ENCODE measurements at regions of chr15 and their contacts with region 1.

Region 1: GRCh38 chr15:92808978-92809879 is 90.9 kb upstream of the CHD2 start:
- DNase-seq: peak; percentile 98 to 100 (median 98)
- ATAC-seq: peak; percentile 75 to 77
- H3K4me3 Mint-ChIP-seq: peak overlapping the region; percentile 82 to 96 (median 93)
- H3K27ac Mint-ChIP-seq: peak overlapping the region; percentile 92 to 99 (median 99)
- H3K4me1 Mint-ChIP-seq: peaks cover 12 to 55% (median 44%) of the 10 kb centered on the region in 4 donors
- H3K27me3 Mint-ChIP-seq: no peaks in the 10 kb centered on the region

Region 2: GRCh38 chr15:92820236-92821021 is 11.2 kb after region 1 on chr15:
- POLR2A ChIA-PET with region 1: interaction called, 140 read pairs
- DNase-seq: peak; percentile 78 to 93 (median 83)
- ATAC-seq: peak; percentile 79 to 91
- H3K4me3 Mint-ChIP-seq: peak overlapping the region; percentile 86 to 95 (median 89)
- H3K27ac Mint-ChIP-seq: peak overlapping the region; percentile 85 to 98 (median 97)
- H3K4me1 Mint-ChIP-seq: peaks cover 16 to 60% (median 49%) of the 10 kb centered on the region in 4 donors
- H3K27me3 Mint-ChIP-seq: no peaks in the 10 kb centered on the region

Region 3: GRCh38 chr15:92845126-92845508 is 35.9 kb after region 1 on chr15:
- POLR2A ChIA-PET with region 1: interaction called, 105 read pairs
- DNase-seq: peak in 4 of 10 donors; percentile 13 to 78 (median 71)
- ATAC-seq: peak; percentile 38 to 43
- H3K4me3 Mint-ChIP-seq: peak overlapping the region; percentile 68 to 92 (median 88)
- H3K27ac Mint-ChIP-seq: peak overlapping the region; percentile 90 to 100 (median 97)
- H3K4me1 Mint-ChIP-seq: peaks cover 32 to 86% (median 74%) of the 10 kb centered on the region in 4 donors
- H3K27me3 Mint-ChIP-seq: no peaks in the 10 kb centered on the region

Region 4: GRCh38 chr15:92889390-92890107 is 80.3 kb after region 1 on chr15:
- POLR2A ChIA-PET with region 1: interaction called, 681 read pairs
- DNase-seq: peak in 3 of 10 donors; percentile 12 to 28 (median 14)
- ATAC-seq: peak; percentile 13 to 21
- H3K4me3 Mint-ChIP-seq: peak overlapping the region; percentile 36 to 96 (median 76)
- H3K27ac Mint-ChIP-seq: peak overlapping the region; percentile 65 to 92 (median 84)
- H3K4me1 Mint-ChIP-seq: peaks cover 30 to 85% (median 61%) of the 10 kb centered on the region in 4 donors
- H3K27me3 Mint-ChIP-seq: no peaks in the 10 kb centered on the region

Region 5: GRCh38 chr15:92917606-92918407 is 108.6 kb after region 1 on chr15:
- POLR2A ChIA-PET with region 1: interaction called, 118 read pairs
- DNase-seq: peak; percentile 75 to 95 (median 90)
- ATAC-seq: peak; percentile 16 to 33
- H3K4me3 Mint-ChIP-seq: peak overlapping the region; percentile 26 to 92 (median 66)
- H3K27ac Mint-ChIP-seq: peak overlapping the region; percentile 90 to 100 (median 98)
- H3K4me1 Mint-ChIP-seq: peaks cover 43 to 93% (median 83%) of the 10 kb centered on the region in 4 donors
- H3K27me3 Mint-ChIP-seq: no peaks in the 10 kb centered on the region